Activated CD8-positive, alpha-beta T cell treated with anti-CD3 and anti-CD28 coated beads, Interleukin-2, amount 10 ng/mL, durations not matched to agents 7 days and 5 days (primary cell): ENCODE measurements at regions of chr5 and their contacts with region 1.

Region 1: GRCh38 chr5:151051066-151051930 is 29.5 kb downstream of the TNIP1 start:
- DNase-seq: peak; percentile 83
- ATAC-seq: peak; percentile 84
- H3K4me3 Mint-ChIP-seq: no peak overlapping the region
- H3K27ac Mint-ChIP-seq: peak overlapping the region; percentile 40
- H3K4me1 Mint-ChIP-seq: peaks cover 14% of the 10 kb centered on the region
- H3K27me3 Mint-ChIP-seq: no peaks in the 10 kb centered on the region

Region 2: GRCh38 chr5:150960791-150961396 is 90.4 kb before region 1 on chr5:
- CTCF ChIA-PET with region 1: no interaction called
- POLR2A ChIA-PET with region 1: no interaction called
- DNase-seq: no peak
- ATAC-seq: no peak
- H3K4me3 Mint-ChIP-seq: no peak overlapping the region
- H3K27ac Mint-ChIP-seq: no peak overlapping the region
- H3K4me1 Mint-ChIP-seq: peaks cover 5% of the 10 kb centered on the region
- H3K27me3 Mint-ChIP-seq: no peaks in the 10 kb centered on the region

Region 3: GRCh38 chr5:151040211-151040747 is 11.0 kb before region 1 on chr5:
- CTCF ChIA-PET with region 1: interaction called, 12 read pairs
- POLR2A ChIA-PET with region 1: no interaction called
- DNase-seq: no peak
- ATAC-seq: no peak
- H3K4me3 Mint-ChIP-seq: no peak overlapping the region
- H3K27ac Mint-ChIP-seq: no peak overlapping the region
- H3K4me1 Mint-ChIP-seq: peaks cover 7% of the 10 kb centered on the region
- H3K27me3 Mint-ChIP-seq: no peaks in the 10 kb centered on the region

Region 4: GRCh38 chr5:151068433-151069197 is 17.3 kb after region 1 on chr5:
- CTCF ChIA-PET with region 1: interaction called, 67 read pairs
- POLR2A ChIA-PET with region 1: no interaction called
- DNase-seq: no peak
- ATAC-seq: peak; percentile 66
- H3K4me3 Mint-ChIP-seq: peak overlapping the region; percentile 28
- H3K27ac Mint-ChIP-seq: peak overlapping the region; percentile 77
- H3K4me1 Mint-ChIP-seq: peaks cover 70% of the 10 kb centered on the region
- H3K27me3 Mint-ChIP-seq: no peaks in the 10 kb centered on the region

Region 5: DNA sequence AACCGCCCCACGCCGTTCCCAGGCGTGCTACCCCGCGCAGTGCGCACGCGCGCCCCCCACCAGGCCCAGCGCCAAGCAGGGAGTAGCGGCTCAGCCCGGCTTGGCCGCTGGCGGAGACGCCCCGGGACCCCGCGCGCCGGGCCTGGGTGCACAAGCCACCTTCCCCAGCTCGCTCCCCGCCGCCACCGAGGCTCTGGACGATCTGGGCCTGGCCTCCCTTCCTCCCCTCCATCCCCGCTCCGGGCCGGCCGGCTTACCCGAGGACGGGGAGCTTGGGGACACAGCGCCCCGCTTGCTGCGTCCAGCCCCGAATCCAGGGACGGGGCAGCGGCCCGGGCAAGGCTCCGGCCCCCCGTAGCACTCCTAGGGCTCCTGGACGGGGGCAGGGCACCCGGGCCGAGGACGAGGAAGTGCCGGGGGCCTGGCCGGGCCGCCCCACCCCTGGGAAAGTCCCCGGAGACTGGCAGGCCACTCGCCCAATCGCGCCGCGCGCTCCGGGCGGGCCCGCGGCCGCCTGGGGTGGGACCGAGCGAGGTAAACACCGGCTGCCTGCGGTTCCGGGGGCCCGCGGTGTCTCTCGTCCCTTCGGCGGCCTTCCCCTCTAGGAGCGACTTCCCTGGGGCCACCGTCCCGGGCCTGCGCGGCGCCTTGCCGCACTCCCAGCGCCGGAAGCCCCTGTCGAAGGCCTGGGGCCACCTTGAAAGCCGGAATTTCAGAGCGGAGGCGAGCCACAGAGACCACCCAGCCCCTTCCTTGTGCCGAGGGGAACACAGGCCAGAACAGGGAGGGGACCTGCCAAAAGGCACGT is 29.5 kb after region 1 on chr5 and contains the start of gene TNIP1:
- CTCF ChIA-PET with region 1: interaction called, 67 read pairs
- POLR2A ChIA-PET with region 1: no interaction called
- DNase-seq: peak; percentile 93
- ATAC-seq: peak; percentile 91
- H3K4me3 Mint-ChIP-seq: peak within 1 kb of the TSS; percentile 85
- H3K27ac Mint-ChIP-seq: peak within 1 kb of the TSS; percentile 86
- H3K4me1 Mint-ChIP-seq: peaks cover 82% of the 10 kb centered on the region
- H3K27me3 Mint-ChIP-seq: no peaks in the 10 kb centered on the region
- total RNA-seq, gene TNIP1: 132 to 138 TPM

Region 6: DNA sequence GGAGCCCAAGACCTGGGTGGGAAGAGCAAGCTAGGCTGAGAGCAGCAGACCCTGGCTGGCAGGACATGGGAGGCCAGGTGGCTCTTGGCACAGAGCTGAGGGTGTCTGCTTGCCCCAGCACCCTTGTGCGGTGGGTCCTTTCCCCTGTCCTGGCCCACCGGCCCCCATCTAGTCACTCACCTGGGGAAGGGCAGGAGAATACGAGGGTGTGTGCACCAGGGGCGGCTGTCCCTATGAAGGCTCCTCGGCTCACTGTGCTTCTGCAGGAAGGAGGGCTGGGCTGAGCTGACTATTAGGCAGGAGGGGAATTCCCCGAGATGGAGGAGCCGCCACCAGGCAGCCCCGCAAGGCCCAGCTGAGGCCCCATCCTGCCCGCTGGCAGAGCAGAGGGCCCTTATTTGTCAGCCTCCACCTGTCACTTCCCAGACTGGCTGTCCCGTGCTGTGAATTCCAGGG is 35.6 kb after region 1 on chr5:
- CTCF ChIA-PET with region 1: interaction called, 21 read pairs
- POLR2A ChIA-PET with region 1: no interaction called
- DNase-seq: peak; percentile 66
- ATAC-seq: peak; percentile 87
- H3K4me3 Mint-ChIP-seq: peak overlapping the region; percentile 45
- H3K27ac Mint-ChIP-seq: peak overlapping the region; percentile 62
- H3K4me1 Mint-ChIP-seq: peaks cover 64% of the 10 kb centered on the region
- H3K27me3 Mint-ChIP-seq: peaks cover 7% of the 10 kb centered on the region

Region 7: DNA sequence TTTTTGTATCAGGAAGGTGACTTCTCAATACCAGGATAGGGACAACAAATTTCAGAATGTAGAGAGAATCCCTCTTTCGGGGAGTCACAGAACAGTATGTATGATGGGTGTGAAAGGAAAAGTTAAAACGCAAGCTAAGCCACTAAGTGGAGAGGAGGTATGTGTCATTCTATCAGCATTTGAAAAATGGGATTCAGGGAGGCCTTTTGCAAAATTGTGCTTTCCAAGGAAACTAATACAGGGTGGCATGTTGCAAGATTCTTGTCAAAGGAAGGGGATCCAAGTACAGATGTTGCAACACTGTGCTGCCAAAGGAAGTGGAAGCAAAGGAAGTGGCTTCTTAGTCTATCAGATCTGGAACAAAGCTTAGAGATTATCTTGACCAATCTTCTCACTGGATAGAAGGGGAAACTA is 42.2 kb after region 1 on chr5:
- CTCF ChIA-PET with region 1: interaction called, 32 read pairs
- POLR2A ChIA-PET with region 1: interaction called, 3 read pairs
- DNase-seq: no peak
- ATAC-seq: peak; percentile 31
- H3K4me3 Mint-ChIP-seq: peak overlapping the region; percentile 58
- H3K27ac Mint-ChIP-seq: peak overlapping the region; percentile 88
- H3K4me1 Mint-ChIP-seq: peaks cover 70% of the 10 kb centered on the region
- H3K27me3 Mint-ChIP-seq: peaks cover 7% of the 10 kb centered on the region